HepG2 (cell line): ENCODE measurements at regions of chr6 and their contacts with region 1.

Region 1: DNA sequence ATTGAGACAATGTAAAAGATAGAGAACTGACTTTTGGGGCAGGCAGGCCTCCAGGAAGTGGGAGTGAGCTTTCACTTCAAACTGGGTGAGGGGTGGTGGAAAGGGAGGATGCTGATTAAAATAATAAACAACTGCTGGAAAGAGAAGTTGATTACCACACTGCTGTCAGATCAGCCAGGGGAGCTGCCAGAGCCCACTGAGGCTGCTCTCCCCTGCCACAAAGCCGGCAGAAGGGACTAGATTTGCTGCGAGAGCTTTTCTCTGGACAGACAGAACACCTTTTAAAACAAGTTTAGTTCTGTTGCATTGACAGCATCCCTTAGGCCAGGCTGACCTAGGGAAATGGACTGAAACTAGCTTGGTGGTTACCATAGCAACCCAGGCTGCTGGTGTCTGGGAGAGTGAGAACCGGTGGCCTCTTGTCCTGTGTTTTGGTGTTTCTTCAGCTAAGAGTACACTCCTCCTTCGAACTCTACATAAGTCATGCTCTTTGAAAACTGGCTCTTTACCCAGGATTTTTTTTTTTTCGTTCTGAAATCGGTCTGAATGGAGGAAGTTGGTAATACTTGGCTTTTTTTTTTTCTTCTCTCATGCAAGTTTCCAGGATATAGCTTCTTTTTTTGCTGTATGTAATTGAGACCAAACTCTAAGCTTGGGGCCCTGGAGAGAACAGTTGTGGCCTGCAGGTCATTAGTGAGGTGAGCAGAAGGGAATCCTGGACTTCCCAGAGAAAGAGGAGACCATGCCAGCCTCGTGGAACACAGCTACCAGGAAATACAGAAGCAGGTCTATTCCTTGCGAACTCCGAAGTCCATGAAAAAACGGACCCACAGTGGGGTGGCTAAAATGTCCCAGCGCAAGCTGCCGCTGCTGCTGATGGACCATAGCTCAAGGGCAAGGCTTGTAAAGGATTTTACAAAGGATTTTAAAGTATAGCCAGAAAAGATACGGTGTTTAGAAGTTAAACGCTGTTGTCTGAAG is 374.4 kb downstream of the UTRN start:
- DNase-seq: peak; percentile 42
- ATAC-seq: peak; percentile 34
- H3K4me3 ChIP-seq: peak overlapping the region in 1 of 3 experiments; percentile 13; a peak in 1 of 6 replicates
- H3K27ac ChIP-seq: peak overlapping the region; percentile 60
- H3K4me1 ChIP-seq: peaks cover 95% of the 10 kb centered on the region
- H3K27me3 ChIP-seq: no peaks in the 10 kb centered on the region
- CTCF ChIP-seq: no peak
- EP300 ChIP-seq: no peak
- POLR2A ChIP-seq: no peak
- RAD21 ChIP-seq: no peak

Region 2: DNA sequence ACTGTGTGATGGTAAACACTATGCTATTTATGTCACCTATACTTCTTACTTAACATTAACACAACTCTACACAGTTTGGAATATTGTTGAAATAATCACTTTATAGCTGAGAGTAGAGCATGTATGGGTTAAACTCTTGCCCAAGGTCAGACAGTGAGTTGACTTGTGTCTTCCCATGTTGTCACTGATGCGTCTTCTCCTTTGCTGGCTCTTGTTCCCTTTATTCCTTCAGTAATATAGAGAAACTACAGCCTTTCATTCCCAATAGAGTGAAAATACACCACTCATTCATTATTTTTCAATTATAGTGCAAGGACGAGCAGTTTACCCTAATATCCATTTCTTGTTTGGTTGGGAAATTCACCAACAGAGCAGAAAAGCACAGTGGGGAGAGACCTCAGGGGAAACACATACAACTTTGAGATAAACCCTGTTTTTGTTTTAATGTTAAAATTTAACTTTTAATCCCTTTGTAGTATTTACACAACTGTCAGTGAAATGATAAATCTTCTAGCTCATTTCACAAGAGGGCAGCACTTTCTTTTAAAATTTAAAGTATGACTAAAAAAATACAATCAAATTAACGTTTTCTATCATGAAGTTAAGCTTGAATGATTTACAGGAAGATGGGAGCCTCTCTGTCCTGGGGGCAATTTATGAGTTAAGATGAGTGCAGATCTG is 11.4 kb before region 1 on chr6:
- CTCF ChIA-PET with region 1: no interaction called
- POLR2A ChIA-PET with region 1: interaction called, 32 read pairs
- in situ Hi-C with region 1: no loop called
- intact Hi-C with region 1: loop called (anchors 1 kb)
- DNase-seq: peak; percentile 83
- ATAC-seq: peak; percentile 76
- H3K4me3 ChIP-seq: peak overlapping the region in 2 of 3 experiments; percentile 13 to 31; a peak in 2 of 6 replicates
- H3K27ac ChIP-seq: peak overlapping the region; percentile 83
- H3K4me1 ChIP-seq: peaks cover 98% of the 10 kb centered on the region
- H3K27me3 ChIP-seq: no peaks in the 10 kb centered on the region
- CTCF ChIP-seq: peak; percentile 39
- EP300 ChIP-seq: peak; percentile 31 to 96; a peak in 2 of 4 replicates
- POLR2A ChIP-seq: no peak
- RAD21 ChIP-seq: no peak